A673 (cell line): ENCODE measurements at regions of chr10 and their contacts with region 1.

Region 1: GRCh38 chr10:68752711-68753350 is 31.8 kb downstream of the CCAR1 start:
- DNase-seq: no peak
- H3K4me3 ChIP-seq: no peak overlapping the region
- H3K27ac ChIP-seq: no peak overlapping the region
- H3K4me1 ChIP-seq: no peaks in the 10 kb centered on the region
- H3K27me3 ChIP-seq: no peaks in the 10 kb centered on the region
- CTCF ChIP-seq: no peak

Region 2: DNA sequence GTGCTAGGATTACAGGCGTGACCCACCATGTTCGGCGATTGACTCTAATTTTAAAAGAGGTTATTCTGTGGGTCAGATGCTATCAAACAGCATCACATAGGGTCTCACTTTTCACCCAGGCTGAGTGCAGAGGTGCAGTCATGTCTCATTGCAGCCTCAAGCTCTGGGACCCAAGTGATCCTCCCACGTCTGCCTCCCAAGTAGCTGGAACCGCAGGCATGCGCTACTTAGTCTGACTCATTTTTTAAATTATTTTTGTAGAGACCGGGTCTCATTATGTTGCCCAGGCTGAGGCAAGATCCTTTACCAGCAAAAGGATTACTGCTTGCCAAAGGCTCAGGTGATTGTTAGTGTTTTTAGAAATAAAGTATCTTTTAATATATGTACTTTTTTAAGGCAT is 31.6 kb after region 1 on chr10:
- CTCF ChIA-PET with region 1: no interaction called
- POLR2A ChIA-PET with region 1: no interaction called
- intact Hi-C with region 1: loop called (anchors 5 kb)
- DNase-seq: no peak
- H3K4me3 ChIP-seq: no peak overlapping the region
- H3K27ac ChIP-seq: no peak overlapping the region
- H3K4me1 ChIP-seq: no peaks in the 10 kb centered on the region
- H3K27me3 ChIP-seq: no peaks in the 10 kb centered on the region
- CTCF ChIP-seq: no peak

Region 3: GRCh38 chr10:68981074-68981473 is 228.2 kb after region 1 on chr10:
- CTCF ChIA-PET with region 1: no interaction called
- POLR2A ChIA-PET with region 1: no interaction called
- intact Hi-C with region 1: loop called (anchors 5 kb)
- DNase-seq: peak; percentile 27
- H3K4me3 ChIP-seq: no peak overlapping the region
- H3K27ac ChIP-seq: no peak overlapping the region
- H3K4me1 ChIP-seq: no peaks in the 10 kb centered on the region
- H3K27me3 ChIP-seq: no peaks in the 10 kb centered on the region
- CTCF ChIP-seq: peak; percentile 33; the same call in 1 of the 2 replicates